CD4-positive, alpha-beta T cell (primary cell): ENCODE measurements at regions of chr16 and their contacts with region 1.

Region 1: GRCh38 chr16:29805378-29806098 is 791 bp upstream of the MAZ start:
- DNase-seq: peak; percentile 95 to 99 (median 98)
- ATAC-seq: peak; percentile 63
- H3K4me3 ChIP-seq: peak overlapping the region; percentile 94
- H3K4me3 Mint-ChIP-seq: peak overlapping the region; percentile 100
- H3K27ac ChIP-seq: peak overlapping the region; percentile 92 to 96
- H3K27ac Mint-ChIP-seq: peak overlapping the region; percentile 96
- H3K4me1 ChIP-seq: peaks cover 52% of the 10 kb centered on the region
- H3K4me1 Mint-ChIP-seq: peaks cover 46% of the 10 kb centered on the region
- H3K27me3 ChIP-seq: no peaks in the 10 kb centered on the region
- H3K27me3 Mint-ChIP-seq: no peaks in the 10 kb centered on the region
- CTCF ChIP-seq: no peak

Region 2: GRCh38 chr16:29738514-29738913 is 67.0 kb before region 1 on chr16:
- CTCF ChIA-PET with region 1: interaction called, 6 read pairs
- POLR2A ChIA-PET with region 1: interaction called, 15 read pairs
- intact Hi-C with region 1: no loop called
- DNase-seq: peak in 13 of 14 experiments; percentile 37 to 91 (median 52)
- ATAC-seq: peak; percentile 90
- H3K4me3 ChIP-seq: no peak overlapping the region
- H3K4me3 Mint-ChIP-seq: peak overlapping the region; percentile 43
- H3K27ac ChIP-seq: peak overlapping the region; percentile 60 to 87
- H3K27ac Mint-ChIP-seq: peak overlapping the region; percentile 98
- H3K4me1 ChIP-seq: peaks cover 81% of the 10 kb centered on the region
- H3K4me1 Mint-ChIP-seq: peaks cover 85% of the 10 kb centered on the region
- H3K27me3 ChIP-seq: no peaks in the 10 kb centered on the region
- H3K27me3 Mint-ChIP-seq: no peaks in the 10 kb centered on the region
- CTCF ChIP-seq: no peak

Region 3: DNA sequence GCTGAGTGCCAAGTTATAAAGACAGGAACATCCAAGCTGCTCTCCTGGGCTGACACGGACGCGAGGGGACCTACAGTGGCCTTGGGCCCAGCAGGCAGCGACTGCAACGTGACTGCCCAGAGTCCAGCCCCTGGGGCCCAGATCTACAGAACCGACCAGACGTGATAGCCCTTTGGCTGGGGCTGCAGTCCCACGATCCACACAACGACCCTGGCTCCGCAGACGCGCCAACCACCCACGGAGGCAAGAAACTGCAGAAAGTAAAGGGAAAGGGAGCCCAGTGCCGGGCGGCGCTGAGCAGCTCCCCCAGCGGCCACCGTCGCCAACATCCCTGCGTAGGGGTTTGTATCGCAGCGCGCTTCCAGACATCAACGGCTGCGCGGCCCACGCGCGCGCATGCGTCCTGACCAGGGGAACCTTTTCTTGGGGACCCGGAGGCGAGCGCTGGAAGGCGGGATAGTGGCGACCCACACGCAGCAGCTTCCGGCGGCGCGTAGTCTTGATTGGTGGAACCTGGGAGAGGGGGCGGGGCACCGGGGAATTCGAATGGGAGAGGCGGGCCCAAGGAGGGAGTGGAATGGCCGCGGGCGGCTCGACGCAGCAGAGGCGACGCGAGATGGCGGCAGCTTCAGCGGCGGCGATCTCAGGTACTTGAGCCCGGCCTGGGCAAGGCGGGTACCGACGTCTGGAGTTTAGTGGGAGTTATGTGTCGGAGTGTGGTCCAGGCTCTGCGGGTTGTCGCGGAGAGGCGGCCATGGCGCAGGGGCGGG is 15.2 kb before region 1 on chr16 and contains the start of gene KIF22:
- CTCF ChIA-PET with region 1: interaction called, 39 read pairs
- POLR2A ChIA-PET with region 1: interaction called, 217 read pairs
- intact Hi-C with region 1: loop called (anchors 1 kb)
- DNase-seq: peak; percentile 99 to 100 (median 100)
- ATAC-seq: peak; percentile 90
- H3K4me3 ChIP-seq: peak within 1 kb of the TSS; percentile 93
- H3K4me3 Mint-ChIP-seq: peak within 1 kb of the TSS; percentile 96
- H3K27ac ChIP-seq: peak within 1 kb of the TSS; percentile 82 to 83
- H3K27ac Mint-ChIP-seq: peak within 1 kb of the TSS; percentile 97
- H3K4me1 ChIP-seq: peaks cover 43% of the 10 kb centered on the region
- H3K4me1 Mint-ChIP-seq: peaks cover 51% of the 10 kb centered on the region
- H3K27me3 ChIP-seq: no peaks in the 10 kb centered on the region
- H3K27me3 Mint-ChIP-seq: no peaks in the 10 kb centered on the region
- CTCF ChIP-seq: peak; percentile 80
- total RNA-seq, gene KIF22: 99.0 to 101 TPM

Region 4: GRCh38 chr16:29848420-29849297 is 43.1 kb after region 1 on chr16:
- CTCF ChIA-PET with region 1: interaction called, 93 read pairs
- POLR2A ChIA-PET with region 1: interaction called, 46 read pairs
- intact Hi-C with region 1: loop called (anchors 1 to 2 kb)
- DNase-seq: peak; percentile 74 to 93 (median 82)
- ATAC-seq: peak; percentile 97
- H3K4me3 ChIP-seq: no peak overlapping the region
- H3K4me3 Mint-ChIP-seq: no peak overlapping the region
- H3K27ac ChIP-seq: no peak overlapping the region
- H3K27ac Mint-ChIP-seq: no peak overlapping the region
- H3K4me1 ChIP-seq: peaks cover 7% of the 10 kb centered on the region
- H3K4me1 Mint-ChIP-seq: peaks cover 7% of the 10 kb centered on the region
- H3K27me3 ChIP-seq: no peaks in the 10 kb centered on the region
- H3K27me3 Mint-ChIP-seq: no peaks in the 10 kb centered on the region
- CTCF ChIP-seq: peak; percentile 92

Region 5: GRCh38 chr16:29973384-29974246 is 168.1 kb after region 1 on chr16 and contains the start of gene TAOK2:
- CTCF ChIA-PET with region 1: interaction called, 6 read pairs
- POLR2A ChIA-PET with region 1: interaction called, 7 read pairs
- intact Hi-C with region 1: loop called in 1 of 2 experiments (anchors 5 kb)
- DNase-seq: peak; percentile 76 to 98 (median 90)
- ATAC-seq: peak; percentile 87
- H3K4me3 ChIP-seq: peak within 1 kb of the TSS; percentile 99
- H3K4me3 Mint-ChIP-seq: peak within 1 kb of the TSS; percentile 98
- H3K27ac ChIP-seq: peak within 1 kb of the TSS; percentile 70 to 83
- H3K27ac Mint-ChIP-seq: peak within 1 kb of the TSS; percentile 84
- H3K4me1 ChIP-seq: peaks cover 39% of the 10 kb centered on the region
- H3K4me1 Mint-ChIP-seq: peaks cover 50% of the 10 kb centered on the region
- H3K27me3 ChIP-seq: no peaks in the 10 kb centered on the region
- H3K27me3 Mint-ChIP-seq: no peaks in the 10 kb centered on the region
- CTCF ChIP-seq: no peak
- total RNA-seq, gene TAOK2: 13.1 to 14.1 TPM

Region 6: GRCh38 chr16:30065143-30065850 is 259.8 kb after region 1 on chr16 and contains the start of gene ALDOA:
- CTCF ChIA-PET with region 1: no interaction called
- POLR2A ChIA-PET with region 1: interaction called, 7 read pairs
- intact Hi-C with region 1: loop called in 1 of 2 experiments (anchors 5 kb)
- DNase-seq: peak; percentile 85 to 97 (median 93)
- ATAC-seq: peak; percentile 80
- H3K4me3 ChIP-seq: peak within 1 kb of the TSS; percentile 100
- H3K4me3 Mint-ChIP-seq: peak within 1 kb of the TSS; percentile 100
- H3K27ac ChIP-seq: peak within 1 kb of the TSS; percentile 87 to 92
- H3K27ac Mint-ChIP-seq: peak within 1 kb of the TSS; percentile 96
- H3K4me1 ChIP-seq: peaks cover 60% of the 10 kb centered on the region
- H3K4me1 Mint-ChIP-seq: peaks cover 44% of the 10 kb centered on the region
- H3K27me3 ChIP-seq: no peaks in the 10 kb centered on the region
- H3K27me3 Mint-ChIP-seq: no peaks in the 10 kb centered on the region
- CTCF ChIP-seq: no peak
- total RNA-seq, gene ALDOA: 390 to 396 TPM